ENCODE measurements at regions of chr6 and their contacts with region 1.

Region 1: DNA sequence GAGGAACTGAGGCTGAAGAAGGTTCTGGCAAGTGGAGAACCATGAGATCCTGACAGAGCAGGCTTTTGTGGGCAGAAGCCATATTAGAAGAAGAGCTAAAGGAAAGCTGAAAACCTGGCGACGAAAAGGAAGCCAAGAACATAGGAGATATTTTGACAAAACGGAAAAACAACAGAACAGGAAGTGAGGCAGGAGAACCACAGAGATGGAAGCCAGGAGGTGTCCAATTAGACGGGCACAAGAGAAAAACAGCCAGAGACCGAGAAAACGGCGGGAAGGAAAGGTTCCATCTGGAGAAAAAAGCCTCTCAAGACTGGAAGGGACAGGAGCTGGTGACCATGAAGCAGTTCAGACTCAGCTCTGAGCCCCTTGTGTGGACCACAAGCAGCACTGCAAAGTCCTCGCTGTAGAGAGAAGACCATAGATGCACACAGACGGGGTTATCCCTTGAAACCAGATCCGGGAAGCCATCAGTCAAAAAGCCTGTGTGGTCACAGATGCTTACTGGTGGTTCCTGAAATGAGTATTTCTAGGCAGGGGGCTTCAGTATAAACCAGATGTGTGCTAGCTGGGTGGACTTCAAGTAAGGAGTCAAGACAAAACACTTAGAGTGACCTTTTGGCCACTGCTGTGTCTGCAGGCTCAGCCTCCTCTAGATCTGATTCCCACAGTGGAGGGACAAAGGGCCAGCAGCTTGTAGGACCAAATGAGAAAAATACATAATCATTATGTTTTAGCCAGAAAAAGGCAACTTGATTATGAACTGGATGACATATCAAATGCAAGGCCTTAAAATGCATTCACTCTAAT is 30.7 kb downstream of the SSR1 start:
- DNase-seq: no peak
- ATAC-seq: no peak
- H3K4me3 ChIP-seq: no peak overlapping the region
- H3K27ac ChIP-seq: no peak overlapping the region
- H3K4me1 ChIP-seq: peaks cover 16% of the 10 kb centered on the region
- H3K27me3 ChIP-seq: no peaks in the 10 kb centered on the region
- CTCF ChIP-seq: no peak
- EP300 ChIP-seq: no peak
- POLR2A ChIP-seq: no peak; the same call in 1 of the 2 replicates
- RAD21 ChIP-seq: no peak

Region 2: DNA sequence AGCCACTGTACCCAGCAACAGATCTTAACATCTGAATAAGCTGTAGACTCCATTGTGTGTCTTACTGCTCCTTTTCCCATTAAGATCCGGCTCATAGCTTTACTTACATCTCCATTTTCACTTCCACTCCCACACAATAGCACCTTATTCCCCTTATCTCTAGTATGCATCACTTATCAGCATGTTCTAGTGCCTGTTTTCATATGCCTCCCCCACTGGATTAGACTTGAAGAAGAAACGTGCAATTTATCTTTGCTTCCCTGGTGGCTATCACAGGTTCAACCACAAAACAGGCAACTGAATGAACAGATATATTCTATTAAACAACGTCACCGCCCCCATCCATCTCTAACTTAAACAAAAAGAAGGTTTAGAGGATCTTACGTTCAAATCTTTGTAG is 18.6 kb after region 1 on chr6:
- CTCF ChIA-PET with region 1: interaction called, 37 read pairs
- POLR2A ChIA-PET with region 1: interaction called, 6 read pairs
- RAD21 ChIA-PET with region 1: interaction called, 14 read pairs
- SMC1A ChIA-PET with region 1: interaction called, 10 read pairs
- in situ Hi-C with region 1: no loop called
- intact Hi-C with region 1: no loop called
- DNase-seq: no peak
- ATAC-seq: no peak
- H3K4me3 ChIP-seq: no peak overlapping the region
- H3K27ac ChIP-seq: no peak overlapping the region
- H3K4me1 ChIP-seq: no peaks in the 10 kb centered on the region; the same call in 1 of the 2 replicates
- H3K27me3 ChIP-seq: no peaks in the 10 kb centered on the region
- CTCF ChIP-seq: no peak
- EP300 ChIP-seq: no peak
- POLR2A ChIP-seq: no peak
- RAD21 ChIP-seq: no peak

Region 3: GRCh38 chr6:7307533-7307932 is 25.2 kb after region 1 on chr6:
- CTCF ChIA-PET with region 1: interaction called, 9 read pairs
- POLR2A ChIA-PET with region 1: interaction called, 6 read pairs
- RAD21 ChIA-PET with region 1: interaction called, 14 read pairs
- SMC1A ChIA-PET with region 1: interaction called, 16 read pairs
- in situ Hi-C with region 1: no loop called
- intact Hi-C with region 1: no loop called
- DNase-seq: no peak
- ATAC-seq: peak; percentile 7; the same call in 1 of the 3 replicates
- H3K4me3 ChIP-seq: peak overlapping the region; percentile 17; the same call in 1 of the 2 replicates
- H3K27ac ChIP-seq: peak overlapping the region; percentile 41; the same call in 1 of the 2 replicates
- H3K4me1 ChIP-seq: peaks cover 10% of the 10 kb centered on the region
- H3K27me3 ChIP-seq: no peaks in the 10 kb centered on the region
- CTCF ChIP-seq: no peak
- EP300 ChIP-seq: no peak
- POLR2A ChIP-seq: no peak
- RAD21 ChIP-seq: no peak

Region 4: GRCh38 chr6:7312616-7313504 is 30.6 kb after region 1 on chr6 and contains the start of gene SSR1:
- CTCF ChIA-PET with region 1: interaction called, 9 read pairs
- POLR2A ChIA-PET with region 1: interaction called, 14 read pairs
- RAD21 ChIA-PET with region 1: interaction called, 14 read pairs
- SMC1A ChIA-PET with region 1: interaction called, 16 read pairs
- in situ Hi-C with region 1: no loop called
- intact Hi-C with region 1: no loop called
- DNase-seq: peak; percentile 85
- ATAC-seq: peak; percentile 99
- H3K4me3 ChIP-seq: peak within 1 kb of the TSS; percentile 95
- H3K27ac ChIP-seq: peak within 1 kb of the TSS; percentile 82
- H3K4me1 ChIP-seq: peaks cover 6% of the 10 kb centered on the region
- H3K27me3 ChIP-seq: no peaks in the 10 kb centered on the region
- CTCF ChIP-seq: no peak
- EP300 ChIP-seq: no peak
- POLR2A ChIP-seq: peak; percentile 96
- RAD21 ChIP-seq: no peak
- polyA plus RNA-seq, gene SSR1: 123 to 151 TPM

Region 5: GRCh38 chr6:7389451-7390225 is 107.3 kb after region 1 on chr6 and contains the starts of genes CAGE1 and RIOK1:
- CTCF ChIA-PET with region 1: interaction called, 67 read pairs
- POLR2A ChIA-PET with region 1: interaction called, 5 read pairs
- RAD21 ChIA-PET with region 1: interaction called, 15 read pairs
- SMC1A ChIA-PET with region 1: interaction called, 41 read pairs
- in situ Hi-C with region 1: no loop called
- intact Hi-C with region 1: loop called (anchors 2 kb)
- DNase-seq: peak; percentile 74
- ATAC-seq: peak; percentile 96
- H3K4me3 ChIP-seq: peak within 1 kb of the TSS; percentile 89
- H3K27ac ChIP-seq: peak within 1 kb of the TSS; percentile 89
- H3K4me1 ChIP-seq: no peaks in the 10 kb centered on the region; the same call in 1 of the 2 replicates
- H3K27me3 ChIP-seq: no peaks in the 10 kb centered on the region
- CTCF ChIP-seq: no peak
- EP300 ChIP-seq: peak in 1 of 2 experiments; percentile 30; a peak in 1 of 4 replicates
- POLR2A ChIP-seq: peak; percentile 97
- RAD21 ChIP-seq: no peak
- polyA plus RNA-seq, gene CAGE1: 0.05 TPM in 1 of 2 experiments, not detected in the other
- polyA plus RNA-seq, gene RIOK1: 31.0 to 40.2 TPM

Measured in GM12878 (cell line).